Dorsolateral prefrontal cortex (tissue), 120 donors: ENCODE measurements at regions of chr9 and their contacts with region 1.

Region 1: DNA sequence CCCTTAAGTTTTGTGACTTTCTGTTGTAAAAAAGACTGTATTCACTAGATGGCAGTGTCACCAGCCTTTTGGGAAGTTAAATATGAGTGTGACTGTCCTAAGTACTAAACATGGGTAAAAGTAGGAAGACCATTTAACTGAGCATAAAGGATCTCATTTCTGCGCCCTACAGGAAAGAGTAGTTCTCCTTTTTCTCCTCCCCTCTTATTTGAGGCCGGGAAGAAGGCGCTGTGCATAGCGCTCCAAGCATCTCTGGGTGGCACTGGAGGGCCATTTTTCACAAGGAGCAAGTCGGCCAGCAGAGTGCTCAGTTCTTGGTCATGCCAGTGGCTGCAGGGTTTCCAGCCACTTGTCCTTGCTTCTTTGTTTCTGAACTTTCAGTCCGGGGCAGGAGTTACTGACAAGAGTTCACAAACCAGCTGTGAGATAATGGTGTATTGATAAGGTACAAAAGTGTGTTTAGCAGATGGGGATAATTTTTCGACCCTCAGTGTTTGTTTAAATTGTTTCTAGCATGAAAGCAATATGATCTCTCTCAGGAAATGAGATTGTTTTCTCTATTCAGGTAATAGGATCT is 227.6 kb upstream of the DMRT1 start:
- DNase-seq: peak; percentile 61 to 88 (median 84)
- H3K4me3 ChIP-seq: peak overlapping the region in 17 of 59 donors; percentile 1 to 29 (median 19)
- H3K27ac ChIP-seq: peak overlapping the region in 57 of 59 donors; percentile 8 to 89 (median 75)
- H3K27me3 ChIP-seq: no peaks in the 10 kb centered on the region
- CTCF ChIP-seq: peak in 55 of 56 donors; percentile 77 to 100 (median 96)

Region 2: DNA sequence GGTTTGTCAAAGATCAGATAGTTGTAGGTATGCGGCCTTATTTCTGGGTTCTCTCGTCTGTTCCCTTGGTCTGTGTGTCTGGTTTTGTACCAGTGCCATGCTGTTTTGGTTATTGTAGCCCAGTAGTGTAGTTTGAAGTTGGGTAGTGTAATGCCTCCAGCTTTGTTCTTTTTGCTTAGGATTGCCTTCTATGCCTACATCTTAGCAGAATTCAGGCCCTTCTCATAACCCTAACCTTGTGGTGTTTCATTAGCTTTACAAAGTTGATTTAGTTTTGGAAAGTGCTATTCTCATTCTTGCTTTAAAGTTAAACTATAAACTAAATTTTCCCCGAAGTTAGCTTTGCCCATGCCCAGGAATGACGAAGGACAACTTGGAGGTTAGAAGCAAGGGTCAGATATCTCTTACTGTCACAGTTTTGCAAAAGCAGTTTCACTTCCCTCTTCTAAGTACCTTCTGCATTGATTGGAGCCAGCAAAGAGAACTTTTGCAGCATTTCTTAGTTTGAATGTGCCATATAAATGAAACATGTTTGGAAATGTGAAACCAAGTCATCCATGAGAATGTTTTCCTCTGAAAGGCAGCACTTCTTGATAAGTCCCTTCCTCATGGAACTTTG is 46.6 kb before region 1 on chr9:
- intact Hi-C with region 1: loop called in 1 of 2 experiments (anchors 5 kb)
- DNase-seq: no peak
- H3K4me3 ChIP-seq: no peak overlapping the region
- H3K27ac ChIP-seq: peak overlapping the region in 16 of 59 donors; percentile 10 to 93 (median 48)
- H3K27me3 ChIP-seq: no peaks in the 10 kb centered on the region
- CTCF ChIP-seq: no peak

Region 3: DNA sequence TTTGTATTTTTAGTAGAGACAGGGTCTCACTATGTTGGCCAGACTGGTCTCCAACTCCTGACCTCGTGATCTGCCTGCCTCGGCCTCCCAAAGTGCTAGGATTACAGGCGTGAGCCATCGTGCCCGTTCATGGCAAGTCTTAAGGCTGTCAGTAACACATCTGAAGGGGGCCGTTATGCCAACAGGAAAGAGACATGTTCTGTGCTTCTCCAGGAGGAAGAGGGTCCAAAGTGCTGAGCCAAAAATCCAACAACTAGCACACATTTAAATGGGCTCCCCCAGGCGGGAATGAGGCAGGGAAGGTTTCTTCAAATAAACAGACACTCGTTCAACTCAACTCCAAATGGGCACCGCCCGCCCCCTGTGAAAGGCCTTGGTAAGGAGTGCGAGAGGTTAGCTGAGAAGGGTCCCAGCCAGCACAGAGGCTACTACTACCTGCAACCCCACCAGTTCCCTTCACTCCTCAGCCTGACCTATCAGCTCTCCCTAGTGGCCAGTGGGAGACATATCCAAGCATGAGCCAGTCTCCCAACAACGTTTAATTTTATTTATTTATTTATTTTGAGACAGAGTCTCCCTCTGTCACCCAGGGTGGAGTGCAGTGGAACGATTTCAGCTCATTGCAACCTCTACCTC is 143.5 kb after region 1 on chr9:
- intact Hi-C with region 1: loop called (anchors 1 to 2 kb)
- DNase-seq: peak in 2 of 10 donors; percentile 33 to 58
- H3K4me3 ChIP-seq: no peak overlapping the region
- H3K27ac ChIP-seq: no peak overlapping the region
- H3K27me3 ChIP-seq: no peaks in the 10 kb centered on the region
- CTCF ChIP-seq: peak in 55 of 56 donors; percentile 38 to 79 (median 62)

Region 4: DNA sequence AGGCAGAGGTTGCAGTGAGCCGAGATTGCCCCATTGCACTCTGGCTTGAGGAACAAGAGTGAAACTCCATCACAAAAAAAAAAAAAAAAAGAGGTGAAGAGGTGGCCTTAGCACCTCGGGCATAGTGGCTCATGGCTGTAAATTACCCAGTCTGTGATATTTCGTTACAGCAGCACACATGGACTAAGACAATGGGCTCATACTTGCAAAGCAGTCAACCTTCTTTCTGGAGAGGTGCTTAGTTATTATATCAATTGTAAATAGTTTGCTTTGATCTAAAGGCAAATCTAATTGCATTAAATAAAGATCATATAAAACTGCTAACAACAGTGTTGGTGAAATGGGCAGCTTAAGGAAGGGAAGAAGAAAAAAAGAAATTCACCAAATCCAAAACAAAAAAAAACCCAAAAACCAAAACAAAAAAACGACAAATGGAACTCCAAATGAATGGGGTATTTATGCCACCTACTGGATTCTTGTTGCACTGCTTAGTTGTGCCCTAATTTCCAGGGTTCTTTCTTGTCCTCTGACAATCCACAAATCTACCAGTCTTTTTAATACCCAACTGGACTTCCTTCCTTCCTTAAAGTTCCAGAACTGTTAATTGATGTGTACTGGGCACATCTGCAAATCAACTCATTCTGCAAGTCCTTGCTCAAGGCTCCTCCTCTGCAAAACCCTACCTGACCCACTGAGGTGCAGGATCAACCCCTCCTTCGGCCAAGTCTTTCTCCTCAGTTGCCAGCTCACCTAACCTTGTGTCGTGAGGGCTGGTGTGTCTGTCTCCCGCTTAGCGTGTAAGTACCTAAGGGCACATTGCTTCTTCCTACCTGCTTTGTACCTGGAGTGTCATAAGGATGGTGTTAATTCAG is 192.7 kb after region 1 on chr9:
- intact Hi-C with region 1: loop called (anchors 2 to 5 kb)
- DNase-seq: no peak
- H3K4me3 ChIP-seq: no peak overlapping the region
- H3K27ac ChIP-seq: no peak overlapping the region
- H3K27me3 ChIP-seq: no peaks in the 10 kb centered on the region
- CTCF ChIP-seq: peak; percentile 46 to 90 (median 80)

Region 5: DNA sequence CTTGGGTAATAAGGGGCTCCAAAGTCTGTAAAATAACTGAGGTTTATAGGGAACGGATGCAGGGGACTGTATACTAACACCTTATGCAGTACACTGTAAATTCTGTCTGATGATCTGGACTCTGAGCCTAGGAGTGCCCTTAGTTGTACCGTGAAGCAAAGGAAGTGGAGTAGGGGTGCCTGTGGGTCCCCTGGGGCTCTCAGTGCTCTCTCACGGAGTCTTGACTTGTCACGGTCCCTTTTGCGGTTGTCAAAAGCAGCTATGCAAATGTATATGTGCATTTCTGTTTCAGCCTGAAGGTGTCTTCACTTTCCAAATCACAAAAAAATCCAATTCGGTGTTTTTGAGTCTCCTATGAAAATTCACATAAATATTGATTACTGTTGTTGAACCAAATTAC is 245.4 kb after region 1 on chr9:
- intact Hi-C with region 1: no loop called
- DNase-seq: no peak
- H3K4me3 ChIP-seq: no peak overlapping the region
- H3K27ac ChIP-seq: no peak overlapping the region
- H3K27me3 ChIP-seq: peaks cover 0 to 17% (median 3%) of the 10 kb centered on the region in 45 donors
- CTCF ChIP-seq: no peak